ENCODE measurements at regions of chr4 and their contacts with region 1.

Region 1: GRCh38 chr4:186297013-186297645 is 31.1 kb downstream of the F11 start:
- DNase-seq: no peak
- H3K4me3 ChIP-seq: no peak overlapping the region
- H3K27ac ChIP-seq: no peak overlapping the region
- H3K4me1 ChIP-seq: no peaks in the 10 kb centered on the region
- H3K27me3 ChIP-seq: no peaks in the 10 kb centered on the region
- CTCF ChIP-seq: peak in 4 of 6 experiments; percentile 30 to 80 (median 70)
- POLR2A ChIP-seq: no peak

Region 2: DNA sequence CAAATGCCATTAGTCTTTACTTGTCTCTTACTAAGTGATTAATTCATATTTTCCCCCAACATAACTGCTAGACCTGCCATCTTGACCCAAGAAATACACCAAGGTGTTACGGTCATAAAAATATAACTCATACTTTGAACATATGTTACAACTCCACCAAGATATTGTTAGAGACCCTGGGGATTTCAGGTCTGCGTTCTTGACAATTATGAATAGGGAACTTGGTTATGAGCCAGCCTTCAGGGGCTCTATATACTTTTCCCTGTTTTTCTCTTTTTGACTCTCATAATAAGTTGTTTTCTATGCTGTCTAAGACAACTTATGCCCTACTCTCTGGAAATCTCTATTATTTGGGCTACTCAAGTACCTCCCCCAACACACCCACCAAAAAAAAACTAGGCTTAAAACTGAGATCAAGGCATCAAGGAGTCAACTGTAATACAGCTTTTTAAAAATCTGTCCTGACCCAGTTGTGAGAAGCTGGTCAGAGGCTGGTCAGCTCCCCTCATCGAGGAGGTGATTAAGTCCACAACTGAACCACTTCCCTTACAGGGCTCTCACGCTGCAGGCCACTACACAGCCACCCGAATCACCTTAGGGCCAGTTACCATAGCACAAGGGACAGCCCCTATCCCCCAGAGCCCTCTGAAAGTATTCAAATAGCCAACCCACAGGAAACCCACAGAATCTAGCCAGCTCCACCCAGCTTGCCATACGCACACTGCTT is 238.7 kb before region 1 on chr4:
- intact Hi-C with region 1: no loop called
- DNase-seq: no peak
- H3K4me3 ChIP-seq: no peak overlapping the region
- H3K27ac ChIP-seq: no peak overlapping the region
- H3K4me1 ChIP-seq: no peaks in the 10 kb centered on the region
- H3K27me3 ChIP-seq: no peaks in the 10 kb centered on the region
- CTCF ChIP-seq: no peak
- POLR2A ChIP-seq: no peak

Region 3: GRCh38 chr4:186587416-186588018 is 290.4 kb after region 1 on chr4:
- intact Hi-C with region 1: loop called (anchors 5 kb)
- DNase-seq: peak; percentile 74 to 80
- H3K4me3 ChIP-seq: no peak overlapping the region
- H3K27ac ChIP-seq: no peak overlapping the region
- H3K4me1 ChIP-seq: no peaks in the 10 kb centered on the region
- H3K27me3 ChIP-seq: no peaks in the 10 kb centered on the region
- CTCF ChIP-seq: peak; percentile 66 to 88 (median 72)
- POLR2A ChIP-seq: no peak